ENCODE measurements at regions of chr14 and their contacts with region 1.

Region 1: GRCh38 chr14:105398044-105398725 is at the start of gene TEX22:
- DNase-seq: peak; percentile 99
- H3K4me3 ChIP-seq: peak within 1 kb of the TSS; percentile 60 to 80
- H3K27ac ChIP-seq: peak within 1 kb of the TSS; percentile 39 to 91
- H3K4me1 ChIP-seq: peaks cover 0 to 19% of the 10 kb centered on the region in 2 experiments; a peak in 1 of 4 replicates
- H3K27me3 ChIP-seq: no peaks in the 10 kb centered on the region
- CTCF ChIP-seq: 0 out of 2 replicates have a peak, but pooled peaks have one; percentile 14
- EP300 ChIP-seq: 0 out of 4 replicates have a peak, but pooled peaks of 1 of the 2 experiments have one; percentile 9
- RAD21 ChIP-seq: no peak
- polyA plus RNA-seq, gene TEX22: 0.26 and 0.29 TPM in 2 replicates

Region 2: GRCh38 chr14:105197271-105197670 is 200.9 kb before region 1 on chr14:
- CTCF ChIA-PET with region 1: no interaction called
- POLR2A ChIA-PET with region 1: no interaction called
- DNase-seq: no peak
- H3K4me3 ChIP-seq: no peak overlapping the region
- H3K27ac ChIP-seq: no peak overlapping the region
- H3K4me1 ChIP-seq: peaks cover 5 to 36% of the 10 kb centered on the region in 2 experiments; a peak in 2 of 4 replicates
- H3K27me3 ChIP-seq: no peaks in the 10 kb centered on the region
- CTCF ChIP-seq: no peak
- EP300 ChIP-seq: no peak
- RAD21 ChIP-seq: no peak

Region 3: GRCh38 chr14:105368965-105369652 is 29.1 kb before region 1 on chr14:
- CTCF ChIA-PET with region 1: interaction called, 11 read pairs
- POLR2A ChIA-PET with region 1: no interaction called
- DNase-seq: no peak
- H3K4me3 ChIP-seq: no peak overlapping the region
- H3K27ac ChIP-seq: no peak overlapping the region
- H3K4me1 ChIP-seq: peaks cover 4 to 7% of the 10 kb centered on the region in 2 experiments; a peak in 2 of 4 replicates
- H3K27me3 ChIP-seq: no peaks in the 10 kb centered on the region
- CTCF ChIP-seq: no peak
- EP300 ChIP-seq: no peak
- RAD21 ChIP-seq: no peak

Region 4: DNA sequence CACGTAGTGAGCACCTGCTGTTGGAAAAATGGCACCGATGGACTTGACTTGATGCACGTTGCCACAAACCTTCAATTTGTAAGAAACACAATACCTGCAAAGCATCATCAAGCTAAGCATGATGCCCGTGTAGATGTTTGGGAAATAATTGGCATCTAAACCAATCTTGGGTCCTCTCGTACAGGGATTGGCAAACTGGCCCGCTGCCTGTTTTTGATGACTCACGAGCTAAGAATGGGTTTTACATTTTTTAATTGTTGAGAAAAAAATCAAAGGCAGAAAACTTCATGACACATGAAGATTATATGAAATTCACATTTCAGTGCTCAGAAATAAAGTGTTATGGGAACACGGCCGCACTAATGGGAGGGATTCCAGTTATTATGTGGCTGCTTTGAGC is 32.4 kb after region 1 on chr14:
- CTCF ChIA-PET with region 1: no interaction called
- POLR2A ChIA-PET with region 1: no interaction called
- DNase-seq: no peak
- H3K4me3 ChIP-seq: no peak overlapping the region
- H3K27ac ChIP-seq: peak overlapping the region in 1 of 2 experiments; percentile 54; a peak in 1 of 4 replicates
- H3K4me1 ChIP-seq: no peaks in the 10 kb centered on the region; a peak in 1 of 4 replicates
- H3K27me3 ChIP-seq: no peaks in the 10 kb centered on the region
- CTCF ChIP-seq: no peak
- EP300 ChIP-seq: no peak
- RAD21 ChIP-seq: no peak

Region 5: GRCh38 chr14:105442125-105442524 is 43.9 kb after region 1 on chr14:
- CTCF ChIA-PET with region 1: no interaction called
- POLR2A ChIA-PET with region 1: no interaction called
- DNase-seq: no peak
- H3K4me3 ChIP-seq: no peak overlapping the region
- H3K27ac ChIP-seq: no peak overlapping the region
- H3K4me1 ChIP-seq: peaks cover 0 to 8% of the 10 kb centered on the region in 2 experiments; a peak in 1 of 4 replicates
- H3K27me3 ChIP-seq: no peaks in the 10 kb centered on the region
- CTCF ChIP-seq: no peak
- EP300 ChIP-seq: no peak
- RAD21 ChIP-seq: no peak

Region 6: GRCh38 chr14:105889701-105890473 is 491.7 kb after region 1 on chr14:
- CTCF ChIA-PET with region 1: no interaction called
- POLR2A ChIA-PET with region 1: no interaction called
- DNase-seq: peak; percentile 80
- H3K4me3 ChIP-seq: no peak overlapping the region; a peak in 1 of 4 replicates
- H3K27ac ChIP-seq: peak overlapping the region in 1 of 2 experiments; percentile 91; a peak in 2 of 4 replicates
- H3K4me1 ChIP-seq: peaks cover 0 to 33% of the 10 kb centered on the region in 2 experiments; a peak in 1 of 4 replicates
- H3K27me3 ChIP-seq: no peaks in the 10 kb centered on the region
- CTCF ChIP-seq: no peak
- EP300 ChIP-seq: peak in 1 of 2 experiments; percentile 75; a peak in 1 of 4 replicates
- RAD21 ChIP-seq: 0 out of 2 replicates have a peak, but pooled peaks have one; percentile 3